Activated naive CD8-positive, alpha-beta T cell treated with anti-CD3 and anti-CD28 coated beads, Interleukin-2, amount 10 ng/mL, durations not matched to agents 7 days and 5 days (primary cell): ENCODE measurements at regions of chr1 and their contacts with region 1.

Region 1: DNA sequence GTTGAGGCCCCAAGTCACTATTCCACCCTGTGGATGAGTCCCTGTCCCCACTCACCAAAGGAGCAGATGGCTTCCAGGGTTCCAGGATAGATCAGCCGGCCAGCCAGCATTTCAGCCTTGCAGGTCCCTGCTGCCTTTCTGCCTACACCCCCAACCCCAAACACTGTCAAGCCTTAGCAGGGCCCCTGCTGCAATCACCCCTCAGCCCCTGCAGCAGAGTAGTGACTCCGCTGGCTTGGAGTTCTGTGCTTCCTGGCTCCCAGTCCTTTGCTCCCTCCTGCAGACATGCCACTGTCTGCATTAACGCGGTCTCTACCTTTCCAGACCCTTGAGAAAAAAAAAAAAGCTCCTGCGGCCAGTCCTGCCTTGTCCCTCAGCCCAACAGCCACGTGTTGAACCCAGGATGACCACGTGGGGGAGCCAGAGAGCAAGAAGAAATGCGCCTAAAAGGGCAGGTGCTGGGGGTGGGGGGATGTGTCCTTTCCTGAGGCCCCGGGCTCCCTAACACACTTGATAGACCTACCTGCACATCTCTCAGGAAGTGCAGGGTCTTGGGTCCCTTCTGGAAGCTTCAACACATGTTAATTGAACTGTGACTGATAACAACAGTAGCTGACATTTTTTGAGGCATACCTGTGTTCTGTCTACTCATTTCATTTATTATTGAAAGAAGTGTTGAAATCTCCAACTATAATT is 37.4 kb downstream of the RASSF5 start:
- DNase-seq: peak; percentile 85
- ATAC-seq: peak; percentile 87
- H3K4me3 Mint-ChIP-seq: no peak overlapping the region
- H3K27ac Mint-ChIP-seq: peak overlapping the region; percentile 37
- H3K4me1 Mint-ChIP-seq: peaks cover 17% of the 10 kb centered on the region
- H3K27me3 Mint-ChIP-seq: no peaks in the 10 kb centered on the region

Region 2: DNA sequence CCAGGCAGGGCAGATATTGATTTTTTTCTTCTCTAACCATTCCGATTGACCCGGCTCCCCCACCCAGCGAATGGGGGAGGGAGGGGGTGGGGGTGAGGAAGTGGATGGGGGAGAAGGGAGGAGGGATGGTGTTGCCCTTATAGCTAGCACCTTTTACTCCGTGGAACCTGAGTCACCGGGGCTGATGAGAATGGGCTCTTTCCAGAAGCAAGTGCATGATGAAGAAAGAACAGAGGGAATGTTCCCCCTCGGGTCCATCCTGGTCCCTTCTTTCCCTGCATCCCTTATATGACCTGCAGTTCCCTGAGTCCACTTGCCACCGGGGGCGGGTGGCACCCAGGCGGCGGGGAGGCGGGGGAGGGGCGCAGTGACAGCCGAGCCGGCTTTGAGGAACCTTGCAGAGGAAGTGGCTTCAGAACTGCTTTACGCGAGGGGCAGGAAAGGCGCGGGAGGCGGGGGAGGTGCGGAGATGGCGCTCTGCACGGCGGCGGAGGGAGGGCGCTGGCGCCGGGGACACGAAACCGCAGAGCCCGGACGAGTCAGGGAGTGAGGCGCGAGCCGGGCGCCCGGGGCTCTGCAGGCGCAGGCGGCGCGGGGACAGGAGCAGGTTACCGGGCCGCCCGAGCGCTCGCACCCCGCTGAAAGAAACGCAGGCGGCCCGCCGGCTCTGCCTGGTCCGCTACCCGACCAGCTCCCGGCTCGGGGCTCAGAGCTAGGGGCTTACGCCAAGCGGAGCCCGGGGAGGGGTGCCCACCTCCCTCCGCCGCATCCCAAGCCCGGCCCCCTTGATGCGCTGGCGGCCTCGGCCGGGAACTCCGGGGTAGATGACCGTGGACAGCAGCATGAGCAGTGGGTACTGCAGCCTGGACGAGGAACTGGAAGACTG is 12.3 kb after region 1 on chr1:
- POLR2A ChIA-PET with region 1: interaction called, 19 read pairs
- DNase-seq: peak; percentile 90
- ATAC-seq: peak; percentile 71
- H3K4me3 Mint-ChIP-seq: peak overlapping the region; percentile 93
- H3K27ac Mint-ChIP-seq: peak overlapping the region; percentile 95
- H3K4me1 Mint-ChIP-seq: peaks cover 68% of the 10 kb centered on the region
- H3K27me3 Mint-ChIP-seq: no peaks in the 10 kb centered on the region